Activated T-helper 1 cell treated with anti-CD3 and anti-CD28 coated beads, Interleukin-12 subunit alpha, Interleukin-12 subunit beta, Interleukin-2, Interleukin-4 antibody, amounts not matched to agents 30 ng/mL and 10 ng/mL and 1 ng/mL, durations not matched to agents 14 hours and 24 hours and 36 hours (primary cell): ENCODE measurements at regions of chr1 and their contacts with region 1.

Region 1: DNA sequence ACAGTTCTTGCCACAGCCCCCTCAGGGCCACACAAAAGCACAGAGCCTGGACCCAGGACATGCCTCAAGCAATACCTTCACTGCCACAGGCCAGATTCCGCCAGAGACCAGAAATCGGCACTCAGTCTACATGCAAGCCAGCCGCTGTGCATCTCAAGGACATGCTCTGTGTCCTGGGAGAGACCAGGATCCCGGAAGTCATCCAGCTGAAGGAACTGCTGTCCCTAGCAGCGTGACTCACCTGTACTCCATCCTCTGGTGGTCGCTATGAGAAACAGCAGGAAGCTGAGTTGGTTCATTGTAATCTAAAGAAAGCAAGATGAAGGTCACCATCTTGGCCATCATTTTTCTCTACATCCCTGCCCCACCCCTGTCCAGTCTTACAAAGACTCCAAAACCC is 401 bp downstream of the ITLN1 start:
- DNase-seq: no peak
- H3K4me3 Mint-ChIP-seq: no peak overlapping the region
- H3K27ac Mint-ChIP-seq: no peak overlapping the region
- H3K4me1 Mint-ChIP-seq: peaks cover 7% of the 10 kb centered on the region
- H3K27me3 Mint-ChIP-seq: peaks cover 11% of the 10 kb centered on the region

Region 2: DNA sequence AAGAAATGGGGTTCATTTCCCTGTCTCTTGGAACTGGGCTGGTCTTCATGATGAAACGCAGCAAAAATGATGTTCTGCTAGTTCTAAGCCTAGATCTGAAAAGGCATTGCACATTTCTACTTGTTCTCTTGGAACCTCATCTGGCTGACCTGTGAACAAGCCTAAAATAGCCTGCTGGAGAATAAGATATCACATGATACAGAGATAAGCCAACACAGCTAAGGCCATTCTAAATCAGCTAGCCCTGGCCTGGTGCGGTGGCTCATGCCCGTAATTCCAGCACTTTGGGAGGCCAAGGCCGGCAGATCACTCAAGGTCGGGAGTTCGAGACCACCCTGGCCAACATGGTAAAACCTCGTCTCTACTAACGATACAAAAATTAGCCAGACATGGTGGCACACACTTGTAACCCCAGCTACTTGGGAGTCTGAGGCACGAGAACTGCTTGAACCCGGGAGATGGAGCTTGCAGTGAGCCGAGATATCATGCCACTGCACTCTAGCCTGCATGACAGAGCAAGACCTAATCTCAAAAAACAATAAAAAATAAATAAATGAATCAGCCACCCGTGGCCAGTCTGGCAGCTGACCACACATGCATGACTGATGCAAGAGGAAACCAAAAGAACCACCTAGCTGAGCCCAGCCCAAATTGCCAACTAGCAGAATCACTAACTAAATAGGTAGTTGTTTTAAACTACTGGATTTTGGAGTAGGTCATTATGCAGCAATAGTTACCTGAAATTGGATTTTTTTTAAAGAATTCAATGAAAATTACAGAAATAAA is 39.9 kb before region 1 on chr1:
- intact Hi-C with region 1: no loop called
- DNase-seq: no peak
- H3K4me3 Mint-ChIP-seq: no peak overlapping the region
- H3K27ac Mint-ChIP-seq: no peak overlapping the region
- H3K4me1 Mint-ChIP-seq: peaks cover 16% of the 10 kb centered on the region
- H3K27me3 Mint-ChIP-seq: peaks cover 4% of the 10 kb centered on the region

Region 3: GRCh38 chr1:160935527-160936258 is 51.1 kb after region 1 on chr1:
- intact Hi-C with region 1: no loop called
- DNase-seq: no peak
- H3K4me3 Mint-ChIP-seq: no peak overlapping the region
- H3K27ac Mint-ChIP-seq: no peak overlapping the region
- H3K4me1 Mint-ChIP-seq: no peaks in the 10 kb centered on the region
- H3K27me3 Mint-ChIP-seq: peaks cover 19% of the 10 kb centered on the region

Region 4: DNA sequence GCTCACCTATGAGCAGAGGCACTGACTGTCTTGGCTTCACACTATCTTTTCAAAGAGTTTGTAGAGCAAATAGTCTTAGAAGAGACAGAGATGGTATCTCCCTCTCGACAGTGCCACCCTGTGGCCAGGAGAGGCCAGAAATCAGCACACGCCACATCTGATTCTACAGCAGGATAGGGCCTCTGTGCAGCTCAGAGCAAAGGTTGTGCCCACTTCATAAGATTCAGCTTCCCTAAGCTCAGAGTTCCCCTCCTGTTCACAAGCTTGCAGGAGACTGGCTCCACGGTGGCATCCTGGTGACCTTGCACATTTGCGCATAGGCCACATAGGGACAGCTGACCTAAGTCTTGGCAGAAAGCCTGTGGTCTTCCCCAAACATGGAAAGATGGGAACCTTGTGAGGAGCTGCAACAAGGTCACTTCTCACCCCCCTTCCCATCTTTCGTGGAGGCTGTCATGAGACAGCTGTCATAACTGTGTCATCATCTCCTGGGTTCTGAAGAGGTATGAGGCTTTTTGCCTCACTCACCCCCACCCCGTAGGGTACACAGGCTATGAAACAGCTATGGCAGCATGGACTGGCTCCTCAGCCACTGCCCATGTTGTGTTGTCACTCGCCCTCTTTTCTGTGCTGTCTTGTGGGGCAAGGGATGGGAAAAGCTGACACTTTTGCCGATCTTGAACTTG is 67.0 kb after region 1 on chr1:
- intact Hi-C with region 1: loop called (anchors 1 kb)
- DNase-seq: peak; percentile 52
- H3K4me3 Mint-ChIP-seq: no peak overlapping the region
- H3K27ac Mint-ChIP-seq: no peak overlapping the region
- H3K4me1 Mint-ChIP-seq: peaks cover 11% of the 10 kb centered on the region
- H3K27me3 Mint-ChIP-seq: peaks cover 6% of the 10 kb centered on the region